PC-3 (cell line): ENCODE measurements at regions of chr1 and their contacts with region 1.

Region 1: DNA sequence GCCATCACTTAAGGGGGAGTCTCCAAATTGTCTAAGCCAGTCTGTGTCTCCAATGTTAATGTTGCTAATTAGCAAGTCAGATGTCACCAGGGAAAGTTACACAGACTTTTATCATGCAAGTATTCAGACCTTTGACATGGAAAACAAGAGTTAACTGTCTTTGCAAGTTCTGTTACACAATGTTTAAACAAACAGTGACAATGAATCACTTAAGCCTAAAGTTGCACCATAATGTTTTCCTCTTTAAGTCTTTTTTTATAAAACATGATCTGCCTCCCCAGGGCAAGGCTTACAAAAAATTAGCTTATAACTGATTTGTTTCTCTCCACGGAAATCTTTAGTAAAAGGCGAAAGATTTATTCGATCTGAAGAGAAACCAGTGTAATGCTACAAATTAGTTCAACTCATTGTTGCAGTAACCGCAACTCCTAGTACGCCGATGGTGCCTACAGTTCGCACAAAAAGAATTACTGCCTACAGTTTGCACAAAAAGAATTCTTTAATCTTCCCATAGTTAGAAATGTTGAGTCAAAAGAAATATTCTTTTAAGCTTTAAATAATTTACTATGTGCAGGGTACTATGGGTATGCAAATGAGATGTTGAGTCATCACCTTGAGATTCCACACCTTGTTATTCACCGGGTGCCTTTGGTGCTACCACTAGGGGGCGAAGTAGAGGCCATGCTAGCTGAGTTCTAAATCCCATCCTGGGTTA is 45.3 kb downstream of the HHAT start:
- DNase-seq: peak; percentile 96
- ATAC-seq: peak; percentile 76
- H3K4me3 ChIP-seq: no peak overlapping the region
- H3K27ac ChIP-seq: peak overlapping the region; percentile 83
- H3K4me1 ChIP-seq: peaks cover 45% of the 10 kb centered on the region
- H3K27me3 ChIP-seq: no peaks in the 10 kb centered on the region
- CTCF ChIP-seq: peak; percentile 97

Region 2: GRCh38 chr1:210302501-210302900 is 71.5 kb before region 1 on chr1:
- CTCF ChIA-PET with region 1: no interaction called
- POLR2A ChIA-PET with region 1: no interaction called
- intact Hi-C with region 1: no loop called
- DNase-seq: no peak
- ATAC-seq: no peak
- H3K4me3 ChIP-seq: no peak overlapping the region
- H3K27ac ChIP-seq: no peak overlapping the region
- H3K4me1 ChIP-seq: no peaks in the 10 kb centered on the region
- H3K27me3 ChIP-seq: peaks cover 8% of the 10 kb centered on the region; the same call in 1 of the 2 replicates
- CTCF ChIP-seq: no peak

Region 3: DNA sequence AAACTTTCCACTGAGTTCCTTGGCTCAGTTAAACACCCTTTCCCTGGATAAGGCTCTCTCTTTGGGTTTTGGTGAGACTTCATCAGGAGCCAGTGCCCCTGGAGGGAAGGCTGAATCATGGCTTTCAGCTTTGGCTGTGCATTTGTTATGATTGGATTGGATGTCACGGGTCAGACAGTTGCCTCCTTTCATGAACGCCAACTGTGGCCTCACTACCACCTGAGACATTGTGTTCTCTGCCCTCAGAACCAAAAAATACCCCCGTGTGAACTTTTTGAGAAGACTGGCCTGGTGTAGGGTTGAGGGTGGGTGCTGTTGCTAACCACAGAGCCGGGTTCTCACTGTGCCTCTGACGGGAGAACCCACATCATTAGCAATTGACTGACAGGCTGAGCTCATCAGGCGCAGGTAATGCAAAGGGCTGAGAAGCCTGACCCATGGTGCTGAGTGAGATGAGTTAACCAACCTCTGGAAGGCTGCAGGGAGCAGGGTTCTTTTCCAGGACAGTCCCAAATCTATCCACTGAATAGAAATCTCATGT is 20.3 kb after region 1 on chr1:
- CTCF ChIA-PET with region 1: no interaction called
- POLR2A ChIA-PET with region 1: no interaction called
- intact Hi-C with region 1: loop called (anchors 2 kb)
- DNase-seq: peak; percentile 25
- ATAC-seq: no peak
- H3K4me3 ChIP-seq: no peak overlapping the region
- H3K27ac ChIP-seq: peak overlapping the region; percentile 74
- H3K4me1 ChIP-seq: peaks cover 20% of the 10 kb centered on the region
- H3K27me3 ChIP-seq: no peaks in the 10 kb centered on the region
- CTCF ChIP-seq: no peak

Region 4: GRCh38 chr1:210505601-210506496 is 131.8 kb after region 1 on chr1:
- CTCF ChIA-PET with region 1: no interaction called
- POLR2A ChIA-PET with region 1: no interaction called
- intact Hi-C with region 1: no loop called
- DNase-seq: no peak
- ATAC-seq: no peak
- H3K4me3 ChIP-seq: no peak overlapping the region
- H3K27ac ChIP-seq: no peak overlapping the region
- H3K4me1 ChIP-seq: no peaks in the 10 kb centered on the region
- H3K27me3 ChIP-seq: peaks cover 11% of the 10 kb centered on the region; the same call in 1 of the 2 replicates
- CTCF ChIP-seq: no peak

Region 5: GRCh38 chr1:210525716-210526454 is 151.8 kb after region 1 on chr1:
- CTCF ChIA-PET with region 1: no interaction called
- POLR2A ChIA-PET with region 1: interaction called, 24 read pairs
- intact Hi-C with region 1: no loop called
- DNase-seq: no peak
- ATAC-seq: no peak
- H3K4me3 ChIP-seq: no peak overlapping the region
- H3K27ac ChIP-seq: no peak overlapping the region
- H3K4me1 ChIP-seq: no peaks in the 10 kb centered on the region
- H3K27me3 ChIP-seq: no peaks in the 10 kb centered on the region; the same call in 1 of the 2 replicates
- CTCF ChIP-seq: no peak

Region 6: GRCh38 chr1:210739627-210740026 is 365.6 kb after region 1 on chr1:
- CTCF ChIA-PET with region 1: no interaction called
- POLR2A ChIA-PET with region 1: no interaction called
- intact Hi-C with region 1: no loop called
- DNase-seq: no peak
- ATAC-seq: no peak
- H3K4me3 ChIP-seq: no peak overlapping the region
- H3K27ac ChIP-seq: no peak overlapping the region
- H3K4me1 ChIP-seq: no peaks in the 10 kb centered on the region
- H3K27me3 ChIP-seq: peaks cover 18% of the 10 kb centered on the region; the same call in 1 of the 2 replicates
- CTCF ChIP-seq: no peak